Activated naive CD4-positive, alpha-beta T cell treated with anti-CD3 and anti-CD28 coated beads for 36 hours (primary cell): ENCODE measurements at regions of chr6 and their contacts with region 1.

Region 1: DNA sequence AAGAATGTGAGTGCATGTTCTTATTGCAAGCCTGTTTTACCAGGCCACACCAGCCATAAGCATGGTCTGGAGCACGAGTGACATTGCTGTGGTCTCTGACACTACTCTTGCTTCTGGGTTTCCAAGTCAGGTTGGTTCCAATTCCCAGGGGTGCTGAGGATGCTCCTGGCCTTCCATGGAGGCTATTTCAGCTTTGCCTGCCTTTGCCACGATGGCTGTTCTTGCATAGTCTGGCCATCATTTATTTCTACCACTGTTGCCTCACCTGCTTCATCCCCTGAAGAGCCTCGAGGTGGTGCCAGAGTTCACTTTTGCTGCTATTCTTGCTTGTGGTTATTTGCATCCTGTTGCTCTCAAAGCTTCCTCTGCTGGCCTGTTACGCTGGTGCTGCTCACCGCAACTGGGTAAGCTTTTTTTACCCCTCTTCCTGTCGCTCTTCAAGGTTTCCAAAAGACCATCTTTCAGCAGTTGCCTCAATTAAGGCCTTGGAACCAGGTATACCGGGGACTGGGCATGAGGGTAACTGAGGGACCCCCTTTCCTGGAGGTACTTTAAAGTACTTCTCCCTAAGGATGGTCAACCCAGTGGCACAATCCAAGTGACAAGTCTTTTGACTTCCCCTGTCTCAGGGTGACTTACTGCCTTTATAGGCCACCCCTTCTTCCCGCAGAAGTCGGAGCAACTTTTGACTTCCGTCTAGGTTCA is 64.5 kb downstream of the AKAP7 start:
- DNase-seq: peak; percentile 84
- H3K4me3 Mint-ChIP-seq: peak overlapping the region; percentile 78
- H3K27ac Mint-ChIP-seq: peak overlapping the region; percentile 96
- H3K4me1 Mint-ChIP-seq: peaks cover 57% of the 10 kb centered on the region
- H3K27me3 Mint-ChIP-seq: no peaks in the 10 kb centered on the region

Region 2: GRCh38 chr6:131063028-131063763 is 136.5 kb before region 1 on chr6 and contains the start of gene EPB41L2:
- CTCF ChIA-PET with region 1: no interaction called
- intact Hi-C with region 1: loop called (anchors 2 kb)
- DNase-seq: peak; percentile 80
- H3K4me3 Mint-ChIP-seq: peak within 1 kb of the TSS; percentile 80
- H3K27ac Mint-ChIP-seq: no peak within 1 kb of the TSS
- H3K4me1 Mint-ChIP-seq: peaks cover 22% of the 10 kb centered on the region
- H3K27me3 Mint-ChIP-seq: peaks cover 2% of the 10 kb centered on the region
- total RNA-seq, gene EPB41L2: 33.5 to 37.7 TPM

Region 3: GRCh38 chr6:131281471-131282270 is 82.0 kb after region 1 on chr6:
- CTCF ChIA-PET with region 1: interaction called, 6 read pairs
- intact Hi-C with region 1: loop called (anchors 1 kb)
- DNase-seq: peak; percentile 84
- H3K4me3 Mint-ChIP-seq: peak overlapping the region; percentile 75
- H3K27ac Mint-ChIP-seq: peak overlapping the region; percentile 96
- H3K4me1 Mint-ChIP-seq: peaks cover 48% of the 10 kb centered on the region
- H3K27me3 Mint-ChIP-seq: no peaks in the 10 kb centered on the region

Region 4: GRCh38 chr6:131451321-131452144 is 251.8 kb after region 1 on chr6:
- CTCF ChIA-PET with region 1: interaction called, 4 read pairs
- intact Hi-C with region 1: loop called (anchors 2 kb)
- DNase-seq: peak; percentile 31
- H3K4me3 Mint-ChIP-seq: no peak overlapping the region
- H3K27ac Mint-ChIP-seq: peak overlapping the region; percentile 83
- H3K4me1 Mint-ChIP-seq: peaks cover 40% of the 10 kb centered on the region
- H3K27me3 Mint-ChIP-seq: no peaks in the 10 kb centered on the region

Region 5: DNA sequence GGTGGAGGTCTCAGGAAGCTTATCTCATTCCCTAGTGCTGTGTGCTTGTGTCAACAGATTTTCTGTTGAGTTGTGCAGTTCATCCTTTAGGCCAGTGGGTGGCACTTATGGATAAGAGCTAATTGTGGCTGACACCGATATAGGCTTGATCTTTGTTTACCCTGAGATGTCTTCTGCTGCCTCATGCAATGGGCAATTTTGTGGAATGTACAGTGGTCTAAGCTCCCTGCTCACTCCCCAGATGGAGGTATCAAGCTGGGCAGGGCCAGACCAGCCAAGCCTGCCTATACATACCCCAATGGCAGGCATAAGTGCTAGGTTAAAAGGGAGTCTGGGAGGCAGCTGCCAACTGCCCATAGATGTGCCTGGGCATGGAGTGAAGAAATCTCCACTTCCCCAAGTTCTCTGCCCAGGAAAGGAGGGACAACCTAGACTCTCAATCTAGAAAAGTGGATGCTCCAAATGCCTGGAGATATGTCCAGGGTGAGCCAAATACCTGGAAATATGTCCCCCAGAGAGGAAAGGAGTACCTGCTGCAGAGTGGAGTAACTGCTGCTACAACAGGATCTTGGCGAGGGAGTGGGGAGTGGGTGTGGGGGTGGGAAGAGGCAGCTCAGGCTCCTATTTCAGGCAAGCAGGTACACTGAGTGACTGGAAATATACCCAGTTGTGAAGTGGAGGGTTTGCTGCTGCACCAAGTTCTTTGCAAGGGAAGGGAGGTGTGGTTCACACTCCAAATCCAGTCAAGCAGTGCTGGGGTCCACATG is 320.1 kb after region 1 on chr6:
- CTCF ChIA-PET with region 1: interaction called, 10 read pairs
- intact Hi-C with region 1: loop called (anchors 1 kb)
- DNase-seq: peak; percentile 76
- H3K4me3 Mint-ChIP-seq: no peak overlapping the region
- H3K27ac Mint-ChIP-seq: peak overlapping the region; percentile 24
- H3K4me1 Mint-ChIP-seq: peaks cover 13% of the 10 kb centered on the region
- H3K27me3 Mint-ChIP-seq: no peaks in the 10 kb centered on the region